Ovary (tissue), 10 donors: ENCODE measurements at regions of chr18 and their contacts with region 1.

Region 1: GRCh38 chr18:56226025-56226424 is 412.4 kb downstream of the TXNL1 start:
- DNase-seq: no peak
- H3K4me3 ChIP-seq: no peak overlapping the region
- H3K27ac ChIP-seq: no peak overlapping the region
- H3K4me1 ChIP-seq: no peaks in the 10 kb centered on the region
- H3K27me3 ChIP-seq: no peaks in the 10 kb centered on the region
- CTCF ChIP-seq: no peak
- EP300 ChIP-seq: no peak
- POLR2A ChIP-seq: no peak

Region 2: DNA sequence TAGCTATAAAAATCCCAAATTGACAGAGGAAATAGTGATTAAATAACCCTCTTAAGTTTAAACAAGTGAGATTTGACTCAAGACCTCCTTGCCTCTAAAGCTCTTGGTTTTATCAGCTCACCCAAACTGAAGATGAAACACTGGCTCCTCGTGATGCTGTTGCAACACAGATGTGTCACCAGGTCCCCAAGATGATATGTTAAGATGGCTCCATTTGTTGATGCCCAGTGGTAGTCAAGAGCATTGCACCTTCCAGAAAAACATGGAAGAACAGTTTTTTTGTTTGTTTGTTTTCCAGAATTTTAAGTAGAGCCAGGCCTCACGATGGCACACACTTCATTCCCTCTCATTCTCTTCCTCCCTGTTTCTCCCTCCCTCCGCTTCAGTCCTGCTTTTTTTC is 12.6 kb after region 1 on chr18:
- intact Hi-C with region 1: loop called in 1 of 4 experiments (anchors 1 kb)
- DNase-seq: no peak
- H3K4me3 ChIP-seq: no peak overlapping the region
- H3K27ac ChIP-seq: no peak overlapping the region
- H3K4me1 ChIP-seq: no peaks in the 10 kb centered on the region
- H3K27me3 ChIP-seq: no peaks in the 10 kb centered on the region
- CTCF ChIP-seq: no peak
- EP300 ChIP-seq: no peak
- POLR2A ChIP-seq: no peak